ENCODE measurements at regions of chr10 and their contacts with region 1.

Region 1: DNA sequence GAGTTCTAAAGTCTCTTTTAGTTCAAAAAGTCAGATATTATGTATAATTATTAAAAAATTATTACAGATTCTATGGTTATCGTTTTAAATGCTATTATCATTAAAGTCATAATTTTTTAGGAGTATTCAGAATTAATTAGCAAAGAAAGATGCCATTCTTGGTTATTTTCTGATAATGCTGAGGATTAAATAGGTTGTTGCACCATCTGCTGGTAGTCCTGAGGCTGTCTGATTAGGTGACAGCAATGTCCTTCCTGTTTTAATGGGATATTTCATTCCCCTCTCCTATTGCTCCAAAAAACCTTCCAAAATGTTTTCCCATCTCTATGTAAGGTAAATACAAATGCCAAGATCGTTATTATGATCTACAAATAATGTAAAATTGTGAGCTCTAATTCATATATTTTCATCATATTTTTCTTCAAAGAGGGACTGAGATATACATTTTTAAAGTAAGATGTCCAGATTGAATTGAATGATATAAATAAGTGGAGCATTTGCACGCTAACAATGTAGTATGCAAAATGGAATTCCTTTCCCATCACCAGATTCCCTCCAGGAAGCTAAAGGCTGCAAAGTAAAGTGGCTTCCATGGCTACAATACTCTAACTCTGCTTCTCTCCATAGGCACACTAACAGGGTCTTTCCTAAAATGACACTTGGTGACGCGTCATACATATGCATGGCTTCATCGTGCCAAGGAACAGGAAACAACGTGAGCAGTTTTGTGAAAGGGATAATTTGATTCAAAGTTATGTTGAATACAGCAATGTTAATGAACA is 58.8 kb upstream of the AKR1E2 start:
- DNase-seq: no peak
- H3K4me3 ChIP-seq: no peak overlapping the region
- H3K27ac ChIP-seq: no peak overlapping the region
- H3K4me1 ChIP-seq: peaks cover 0 to 15% of the 10 kb centered on the region in 2 donors
- H3K27me3 ChIP-seq: no peaks in the 10 kb centered on the region
- CTCF ChIP-seq: peak; percentile 65 to 81 (median 73)

Region 2: GRCh38 chr10:3226960-3227744 is 1540.1 kb before region 1 on chr10:
- intact Hi-C with region 1: loop called (anchors 5 kb)
- DNase-seq: no peak
- H3K4me3 ChIP-seq: peak overlapping the region in 1 of 2 donors; percentile 7
- H3K27ac ChIP-seq: peak overlapping the region; percentile 44 to 60
- H3K4me1 ChIP-seq: peaks cover 0 to 21% of the 10 kb centered on the region in 2 donors
- H3K27me3 ChIP-seq: no peaks in the 10 kb centered on the region
- CTCF ChIP-seq: no peak

Region 3: GRCh38 chr10:3887885-3888476 is 879.2 kb before region 1 on chr10:
- intact Hi-C with region 1: loop called (anchors 10 kb)
- DNase-seq: peak; percentile 65 to 95
- H3K4me3 ChIP-seq: no peak overlapping the region
- H3K27ac ChIP-seq: peak overlapping the region; percentile 87
- H3K4me1 ChIP-seq: peaks cover 3 to 30% of the 10 kb centered on the region in 2 donors
- H3K27me3 ChIP-seq: no peaks in the 10 kb centered on the region
- CTCF ChIP-seq: no peak

Region 4: DNA sequence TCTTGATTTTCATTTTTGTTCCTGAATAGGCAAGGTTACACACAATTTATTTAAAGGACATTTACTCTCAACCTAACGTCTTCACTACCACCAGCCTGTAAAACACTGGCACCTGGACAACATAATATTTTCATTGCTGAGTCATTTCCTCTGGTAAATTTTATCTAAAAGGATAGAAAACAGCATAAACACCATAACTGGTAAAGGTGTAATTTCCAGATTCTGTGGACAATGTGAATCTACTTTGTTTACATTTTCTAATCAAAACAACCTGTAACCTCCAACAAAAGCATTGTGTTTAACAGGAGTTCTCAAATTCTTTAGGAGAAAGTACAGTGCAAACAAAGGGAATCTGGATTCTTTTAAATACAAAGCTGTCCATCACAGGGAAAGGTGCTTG is 413.3 kb before region 1 on chr10:
- intact Hi-C with region 1: loop called (anchors 2 kb)
- DNase-seq: no peak
- H3K4me3 ChIP-seq: peak overlapping the region in 1 of 2 donors; percentile 25
- H3K27ac ChIP-seq: peak overlapping the region; percentile 68 to 76
- H3K4me1 ChIP-seq: peaks cover 7 to 36% of the 10 kb centered on the region in 2 donors
- H3K27me3 ChIP-seq: no peaks in the 10 kb centered on the region
- CTCF ChIP-seq: no peak

Region 5: GRCh38 chr10:4652111-4653010 is 114.9 kb before region 1 on chr10:
- intact Hi-C with region 1: no loop called
- DNase-seq: no peak
- H3K4me3 ChIP-seq: no peak overlapping the region
- H3K27ac ChIP-seq: no peak overlapping the region
- H3K4me1 ChIP-seq: peaks cover 0 to 19% of the 10 kb centered on the region in 2 donors
- H3K27me3 ChIP-seq: no peaks in the 10 kb centered on the region
- CTCF ChIP-seq: no peak

Region 6: GRCh38 chr10:4663162-4663904 is 103.9 kb before region 1 on chr10:
- intact Hi-C with region 1: loop called (anchors 5 kb)
- DNase-seq: peak; percentile 43 to 93
- H3K4me3 ChIP-seq: peak overlapping the region in 1 of 2 donors; percentile 31
- H3K27ac ChIP-seq: peak overlapping the region; percentile 82 to 94
- H3K4me1 ChIP-seq: peaks cover 11 to 28% of the 10 kb centered on the region in 2 donors
- H3K27me3 ChIP-seq: no peaks in the 10 kb centered on the region
- CTCF ChIP-seq: no peak

Region 7: DNA sequence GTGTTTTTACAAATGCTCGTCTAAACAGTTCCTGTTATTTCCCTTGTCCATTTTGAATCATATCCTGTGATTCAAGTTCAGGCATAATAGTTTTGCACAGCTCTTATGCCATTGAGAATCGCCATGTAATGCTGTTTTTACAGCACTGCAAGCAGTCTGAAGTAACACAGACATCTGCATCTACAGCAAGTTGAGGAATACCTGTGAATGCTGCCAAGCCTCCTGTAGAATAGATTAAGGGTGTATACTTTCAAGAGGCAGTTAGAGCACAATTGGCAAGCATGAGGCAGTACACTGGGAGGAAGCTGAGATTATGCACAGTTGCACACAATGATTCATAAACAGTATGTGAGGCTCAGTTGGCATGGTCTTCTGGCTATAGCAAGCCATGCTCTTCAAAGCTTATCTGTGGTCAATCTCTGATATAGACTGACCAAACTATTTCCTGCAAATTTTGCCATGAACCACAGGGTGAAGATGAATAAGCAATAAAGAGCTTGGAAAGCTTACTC is 63.1 kb before region 1 on chr10:
- intact Hi-C with region 1: no loop called
- DNase-seq: no peak
- H3K4me3 ChIP-seq: no peak overlapping the region
- H3K27ac ChIP-seq: no peak overlapping the region
- H3K4me1 ChIP-seq: no peaks in the 10 kb centered on the region
- H3K27me3 ChIP-seq: no peaks in the 10 kb centered on the region
- CTCF ChIP-seq: no peak

Measured in ascending aorta (tissue), 2 donors.